CD4-positive, alpha-beta memory T cell (primary cell): ENCODE measurements at regions of chr2 and their contacts with region 1.

Region 1: GRCh38 chr2:24075915-24076848 is at the start of gene SF3B6:
- DNase-seq: peak; percentile 99 to 100 (median 99)
- H3K4me3 ChIP-seq: peak within 1 kb of the TSS; percentile 87 to 94
- H3K4me3 Mint-ChIP-seq: peak within 1 kb of the TSS; percentile 98 to 100 (median 99)
- H3K27ac ChIP-seq: peak within 1 kb of the TSS; percentile 89
- H3K27ac Mint-ChIP-seq: peak within 1 kb of the TSS; percentile 96 to 100 (median 99)
- H3K4me1 ChIP-seq: peaks cover 28% of the 10 kb centered on the region
- H3K4me1 Mint-ChIP-seq: peaks cover 24 to 48% (median 32%) of the 10 kb centered on the region in 4 donors
- H3K27me3 ChIP-seq: no peaks in the 10 kb centered on the region
- H3K27me3 Mint-ChIP-seq: no peaks in the 10 kb centered on the region
- total RNA-seq, gene SF3B6: 50.0 to 55.3 TPM

Region 2: GRCh38 chr2:23824777-23825212 is 251.4 kb before region 1 on chr2:
- CTCF ChIA-PET with region 1: interaction called, 108 read pairs
- POLR2A ChIA-PET with region 1: interaction called, 8 read pairs
- intact Hi-C with region 1: no loop called
- DNase-seq: peak in 4 of 5 donors; percentile 45 to 63 (median 54)
- H3K4me3 ChIP-seq: no peak overlapping the region
- H3K4me3 Mint-ChIP-seq: no peak overlapping the region
- H3K27ac ChIP-seq: no peak overlapping the region
- H3K27ac Mint-ChIP-seq: no peak overlapping the region
- H3K4me1 ChIP-seq: no peaks in the 10 kb centered on the region
- H3K4me1 Mint-ChIP-seq: peaks cover 0 to 4% (median 0%) of the 10 kb centered on the region in 4 donors
- H3K27me3 ChIP-seq: no peaks in the 10 kb centered on the region
- H3K27me3 Mint-ChIP-seq: no peaks in the 10 kb centered on the region

Region 3: GRCh38 chr2:23939987-23940717 is 136.0 kb before region 1 on chr2 and contains the start of gene UBXN2A:
- CTCF ChIA-PET with region 1: no interaction called
- POLR2A ChIA-PET with region 1: interaction called, 15 read pairs
- intact Hi-C with region 1: loop called (anchors 5 kb)
- DNase-seq: peak; percentile 69 to 82 (median 80)
- H3K4me3 ChIP-seq: peak within 1 kb of the TSS; percentile 76 to 81
- H3K4me3 Mint-ChIP-seq: peak within 1 kb of the TSS; percentile 90 to 97 (median 94)
- H3K27ac ChIP-seq: peak within 1 kb of the TSS; percentile 70
- H3K27ac Mint-ChIP-seq: peak within 1 kb of the TSS; percentile 90 to 96 (median 95)
- H3K4me1 ChIP-seq: peaks cover 25% of the 10 kb centered on the region
- H3K4me1 Mint-ChIP-seq: peaks cover 21 to 46% (median 30%) of the 10 kb centered on the region in 4 donors
- H3K27me3 ChIP-seq: peaks cover 4% of the 10 kb centered on the region
- H3K27me3 Mint-ChIP-seq: no peaks in the 10 kb centered on the region
- total RNA-seq, gene UBXN2A: 14.5 to 15.0 TPM

Region 4: GRCh38 chr2:24065341-24065740 is 10.8 kb before region 1 on chr2:
- CTCF ChIA-PET with region 1: interaction called, 7 read pairs
- POLR2A ChIA-PET with region 1: interaction called, 15 read pairs
- intact Hi-C with region 1: no loop called
- DNase-seq: no peak
- H3K4me3 ChIP-seq: no peak overlapping the region
- H3K4me3 Mint-ChIP-seq: no peak overlapping the region
- H3K27ac ChIP-seq: no peak overlapping the region
- H3K27ac Mint-ChIP-seq: no peak overlapping the region
- H3K4me1 ChIP-seq: no peaks in the 10 kb centered on the region
- H3K4me1 Mint-ChIP-seq: peaks cover 0 to 5% (median 0%) of the 10 kb centered on the region in 4 donors
- H3K27me3 ChIP-seq: no peaks in the 10 kb centered on the region
- H3K27me3 Mint-ChIP-seq: peaks cover 0 to 3% of the 10 kb centered on the region in 2 donors

Region 5: DNA sequence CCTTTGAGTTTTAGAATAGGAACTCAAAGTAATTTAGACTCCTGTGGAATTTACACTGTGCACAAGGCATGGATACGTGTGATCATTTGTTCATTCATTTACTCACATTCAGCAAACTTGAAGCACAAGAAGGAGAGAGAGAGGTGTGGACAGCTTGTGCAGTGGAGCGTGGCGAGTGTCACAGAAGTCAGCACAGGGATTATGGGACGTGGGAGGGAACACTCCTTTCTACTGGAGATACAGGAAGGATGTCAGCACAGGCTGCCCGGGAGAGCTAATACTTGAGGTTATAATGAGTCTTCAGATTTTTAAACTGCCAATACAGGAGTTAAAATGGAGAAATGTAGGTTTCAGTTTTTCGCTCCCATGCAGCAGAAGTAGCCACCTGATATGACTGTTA is 105.7 kb after region 1 on chr2:
- CTCF ChIA-PET with region 1: no interaction called
- POLR2A ChIA-PET with region 1: no interaction called
- intact Hi-C with region 1: no loop called
- DNase-seq: no peak
- H3K4me3 ChIP-seq: no peak overlapping the region
- H3K4me3 Mint-ChIP-seq: no peak overlapping the region
- H3K27ac ChIP-seq: no peak overlapping the region
- H3K27ac Mint-ChIP-seq: no peak overlapping the region
- H3K4me1 ChIP-seq: no peaks in the 10 kb centered on the region
- H3K4me1 Mint-ChIP-seq: no peaks in the 10 kb centered on the region
- H3K27me3 ChIP-seq: no peaks in the 10 kb centered on the region
- H3K27me3 Mint-ChIP-seq: no peaks in the 10 kb centered on the region

Region 6: DNA sequence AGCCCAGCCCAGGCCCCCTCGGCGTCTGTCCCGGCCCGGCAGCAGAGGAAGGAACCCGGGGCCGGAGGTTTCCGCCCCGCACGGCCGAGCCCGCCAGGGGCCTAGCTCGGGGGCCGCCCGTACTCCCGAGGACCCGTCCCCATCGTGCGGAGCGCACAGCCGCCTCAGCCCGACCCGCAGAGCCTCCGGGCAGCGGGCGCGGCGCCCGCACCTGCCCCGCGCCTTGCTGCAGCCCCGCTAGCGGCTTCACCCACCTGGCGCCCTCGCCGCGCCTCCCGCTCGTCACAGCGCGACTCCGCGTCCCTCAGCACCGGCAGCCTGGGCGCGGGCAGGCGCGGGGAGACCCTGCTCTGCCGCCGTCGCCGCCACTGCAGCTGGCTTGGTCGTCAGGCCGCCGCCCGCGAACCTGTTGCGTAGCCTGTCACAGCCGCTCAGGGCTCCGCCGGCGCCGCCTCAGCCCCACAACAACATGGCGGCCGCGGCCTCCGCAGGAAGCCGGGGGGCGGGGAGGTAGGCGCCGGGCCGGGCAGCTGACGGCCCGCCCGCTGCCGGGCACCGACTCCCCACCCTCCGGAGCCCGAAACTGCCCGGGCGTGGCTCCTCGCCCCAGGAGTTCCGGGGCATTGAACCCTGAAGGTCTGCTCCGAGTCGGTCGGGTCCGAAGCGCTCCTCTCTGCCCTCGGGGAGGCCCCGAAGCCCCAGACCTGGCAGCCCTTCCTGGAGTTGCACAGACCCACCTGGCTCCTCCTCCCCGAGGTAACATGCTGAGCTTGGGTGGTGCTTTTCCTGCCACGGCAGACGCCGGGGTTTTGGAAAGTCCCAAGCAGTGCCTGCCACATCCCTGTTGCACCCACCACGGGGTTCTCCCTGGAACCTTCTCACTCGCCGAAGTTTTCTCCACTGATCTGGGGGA is 284.1 kb after region 1 on chr2 and contains the start of gene ITSN2:
- CTCF ChIA-PET with region 1: no interaction called
- POLR2A ChIA-PET with region 1: interaction called, 3 read pairs
- intact Hi-C with region 1: loop called (anchors 1 kb)
- DNase-seq: peak; percentile 82 to 90 (median 86)
- H3K4me3 ChIP-seq: peak within 1 kb of the TSS; percentile 24 to 89
- H3K4me3 Mint-ChIP-seq: peak within 1 kb of the TSS; percentile 90 to 96 (median 94)
- H3K27ac ChIP-seq: peak within 1 kb of the TSS; percentile 96
- H3K27ac Mint-ChIP-seq: peak within 1 kb of the TSS; percentile 91 to 98 (median 96)
- H3K4me1 ChIP-seq: peaks cover 31% of the 10 kb centered on the region
- H3K4me1 Mint-ChIP-seq: peaks cover 18 to 41% (median 30%) of the 10 kb centered on the region in 4 donors
- H3K27me3 ChIP-seq: no peaks in the 10 kb centered on the region
- H3K27me3 Mint-ChIP-seq: no peaks in the 10 kb centered on the region
- total RNA-seq, gene ITSN2: 133 to 135 TPM